Esophagus muscularis mucosa (tissue), 4 donors: ENCODE measurements at regions of chr6 and their contacts with region 1.

Region 1: GRCh38 chr6:20291764-20292580 is 79.7 kb upstream of the MBOAT1 start:
- DNase-seq: peak; percentile 96
- H3K4me3 ChIP-seq: no peak overlapping the region
- H3K27ac ChIP-seq: no peak overlapping the region
- H3K4me1 ChIP-seq: peaks cover 0 to 4% (median 0%) of the 10 kb centered on the region in 4 donors
- H3K27me3 ChIP-seq: no peaks in the 10 kb centered on the region
- CTCF ChIP-seq: peak; percentile 88 to 95 (median 88)
- EP300 ChIP-seq: no peak
- POLR2A ChIP-seq: no peak

Region 2: DNA sequence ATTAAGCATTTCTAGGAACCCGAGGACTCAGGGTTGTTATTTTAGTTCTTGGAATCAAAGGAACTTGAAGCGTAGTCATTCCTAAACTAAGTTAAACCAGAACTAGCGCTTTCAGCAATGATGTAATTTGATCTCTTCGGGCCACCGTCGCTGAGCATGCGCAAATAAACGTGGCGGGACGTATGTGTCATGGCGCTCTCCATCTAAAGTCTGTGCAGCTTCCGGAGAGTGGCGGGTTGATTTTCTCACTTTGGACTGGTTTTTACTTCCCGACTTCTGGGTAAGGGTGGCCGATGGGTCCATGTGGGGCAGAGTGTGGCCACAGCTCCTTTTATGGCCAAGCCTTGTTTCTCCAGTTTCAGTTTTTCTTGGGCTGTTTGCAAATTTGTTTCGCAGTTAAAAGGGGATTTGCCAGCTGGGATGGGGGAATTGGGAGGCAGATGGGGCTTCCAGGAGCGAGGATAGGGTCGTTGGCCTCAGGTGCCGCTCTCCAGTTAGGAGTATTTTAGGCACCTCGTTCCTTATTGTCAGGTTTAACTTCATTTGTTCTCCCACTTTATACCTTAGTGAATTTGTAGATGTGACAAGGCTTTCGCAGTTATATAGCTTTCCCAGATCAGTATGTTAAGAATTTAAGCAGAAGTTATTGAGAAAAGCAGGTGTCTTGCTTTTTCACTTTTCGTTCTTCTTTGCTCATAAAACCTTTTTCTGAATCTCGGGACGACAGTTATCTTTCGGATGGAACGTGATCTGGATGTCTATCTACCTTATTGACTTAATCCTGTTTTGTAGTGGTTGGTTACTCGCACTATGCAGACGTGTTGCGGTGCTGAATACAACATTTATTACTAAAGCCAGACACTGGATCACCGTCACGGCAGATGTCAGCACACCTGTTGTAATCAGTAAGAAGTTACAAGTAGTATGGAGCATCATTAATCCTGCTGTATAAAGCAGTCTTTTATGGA is 242.6 kb after region 1 on chr6 and contains the start of gene CDKAL1:
- intact Hi-C with region 1: loop called (anchors 2 kb)
- DNase-seq: peak; percentile 96
- H3K4me3 ChIP-seq: peak within 1 kb of the TSS; percentile 86 to 95 (median 88)
- H3K27ac ChIP-seq: peak within 1 kb of the TSS; percentile 84 to 93 (median 90)
- H3K4me1 ChIP-seq: peaks cover 11 to 32% (median 21%) of the 10 kb centered on the region in 4 donors
- H3K27me3 ChIP-seq: no peaks in the 10 kb centered on the region
- CTCF ChIP-seq: peak in 1 of 3 experiments; percentile 19
- EP300 ChIP-seq: no peak
- POLR2A ChIP-seq: no peak
- total RNA-seq, gene CDKAL1: 10.3 to 11.2 (median 10.5) TPM